PC-3 (cell line): ENCODE measurements at regions of chr7 and their contacts with region 1.

Region 1: GRCh38 chr7:139016931-139017511 is 18.8 kb downstream of the ZC3HAV1L start:
- DNase-seq: peak; percentile 74
- ATAC-seq: peak; percentile 96
- H3K4me3 ChIP-seq: no peak overlapping the region
- H3K27ac ChIP-seq: no peak overlapping the region
- H3K4me1 ChIP-seq: no peaks in the 10 kb centered on the region; the same call in 1 of the 2 replicates
- H3K27me3 ChIP-seq: no peaks in the 10 kb centered on the region
- CTCF ChIP-seq: peak; percentile 81

Region 2: DNA sequence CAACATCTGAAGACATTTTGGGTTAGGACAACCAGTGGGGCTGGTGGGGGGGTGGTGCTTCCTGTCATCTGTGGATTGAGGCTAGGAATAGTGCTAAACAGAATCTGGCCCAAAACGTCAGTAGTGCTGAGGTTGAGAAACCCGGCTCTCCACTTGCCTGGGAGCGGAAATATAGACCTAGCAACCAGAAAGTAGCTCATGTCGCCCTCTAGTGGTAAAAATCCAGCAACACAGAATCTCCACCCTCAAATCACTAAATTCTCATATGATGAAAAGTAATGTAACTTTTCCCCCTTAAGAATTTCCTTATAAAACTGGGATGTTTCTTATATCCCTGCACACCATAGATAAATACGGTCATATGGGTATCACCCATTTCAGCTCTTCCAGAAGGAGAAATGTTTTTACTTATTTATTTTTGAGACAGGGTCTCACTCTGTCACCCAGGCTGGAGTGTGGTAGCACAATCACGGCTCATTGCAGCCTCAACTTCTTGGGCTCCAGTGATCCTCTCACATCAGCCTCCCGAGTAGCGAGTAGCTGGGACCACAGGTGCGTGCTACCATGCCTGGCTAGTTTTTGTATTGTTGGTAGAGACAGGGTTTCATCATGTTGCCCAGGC is 58.1 kb after region 1 on chr7:
- CTCF ChIA-PET with region 1: interaction called, 13 read pairs
- POLR2A ChIA-PET with region 1: no interaction called
- intact Hi-C with region 1: loop called (anchors 2 kb)
- DNase-seq: peak; percentile 83
- ATAC-seq: peak; percentile 86
- H3K4me3 ChIP-seq: no peak overlapping the region
- H3K27ac ChIP-seq: no peak overlapping the region
- H3K4me1 ChIP-seq: peaks cover 3% of the 10 kb centered on the region; the same call in 1 of the 2 replicates
- H3K27me3 ChIP-seq: no peaks in the 10 kb centered on the region
- CTCF ChIP-seq: peak; percentile 84

Region 3: GRCh38 chr7:139127648-139128047 is 110.6 kb after region 1 on chr7:
- CTCF ChIA-PET with region 1: no interaction called
- POLR2A ChIA-PET with region 1: no interaction called
- intact Hi-C with region 1: loop called (anchors 1 kb)
- DNase-seq: no peak
- ATAC-seq: peak; percentile 55; the same call in 1 of the 2 replicates
- H3K4me3 ChIP-seq: no peak overlapping the region
- H3K27ac ChIP-seq: no peak overlapping the region
- H3K4me1 ChIP-seq: no peaks in the 10 kb centered on the region
- H3K27me3 ChIP-seq: no peaks in the 10 kb centered on the region
- CTCF ChIP-seq: no peak